Activated CD4-positive, alpha-beta memory T cell treated with anti-CD3 and anti-CD28 coated beads, Interleukin-2, amount 10 ng/mL, durations not matched to agents 7 days and 5 days (primary cell): ENCODE measurements at regions of chr17 and their contacts with region 1.

Region 1: DNA sequence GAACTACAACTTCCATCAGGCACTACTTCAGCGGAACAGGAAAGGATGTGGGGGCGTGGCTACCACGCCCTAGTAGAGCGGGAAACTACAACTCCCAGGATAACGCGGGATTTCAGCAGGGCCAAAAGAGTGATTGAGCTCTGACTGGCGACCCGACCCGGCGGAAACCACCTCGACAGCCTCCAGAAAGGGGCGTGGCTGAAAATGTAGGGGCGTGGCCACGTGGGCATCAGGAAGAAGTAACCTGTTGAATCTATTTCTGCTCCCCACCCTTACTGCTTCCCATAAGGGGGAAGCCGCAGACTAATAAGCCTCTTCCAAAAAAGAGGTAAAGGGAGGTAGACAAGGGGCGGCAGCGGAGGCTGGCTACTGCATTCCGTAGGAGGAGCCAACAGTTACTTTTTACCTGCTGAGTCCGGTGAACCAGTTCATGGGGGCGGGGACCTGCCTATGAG is at the start of gene TMEM102:
- DNase-seq: peak; percentile 98
- H3K4me3 Mint-ChIP-seq: peak within 1 kb of the TSS; percentile 90
- H3K27ac Mint-ChIP-seq: peak within 1 kb of the TSS; percentile 98
- H3K4me1 Mint-ChIP-seq: peaks cover 39% of the 10 kb centered on the region
- H3K27me3 Mint-ChIP-seq: peaks cover 20% of the 10 kb centered on the region
- total RNA-seq, gene TMEM102: 18.0 TPM

Region 2: GRCh38 chr17:7336240-7337175 is 98.7 kb before region 1 on chr17 and contains the start of gene ACAP1:
- CTCF ChIA-PET with region 1: interaction called, 10 read pairs
- POLR2A ChIA-PET with region 1: interaction called, 12 read pairs
- DNase-seq: peak; percentile 93
- H3K4me3 Mint-ChIP-seq: peak within 1 kb of the TSS; percentile 91
- H3K27ac Mint-ChIP-seq: peak within 1 kb of the TSS; percentile 91
- H3K4me1 Mint-ChIP-seq: peaks cover 59% of the 10 kb centered on the region
- H3K27me3 Mint-ChIP-seq: no peaks in the 10 kb centered on the region
- total RNA-seq, gene ACAP1: 682 to 709 TPM

Region 3: DNA sequence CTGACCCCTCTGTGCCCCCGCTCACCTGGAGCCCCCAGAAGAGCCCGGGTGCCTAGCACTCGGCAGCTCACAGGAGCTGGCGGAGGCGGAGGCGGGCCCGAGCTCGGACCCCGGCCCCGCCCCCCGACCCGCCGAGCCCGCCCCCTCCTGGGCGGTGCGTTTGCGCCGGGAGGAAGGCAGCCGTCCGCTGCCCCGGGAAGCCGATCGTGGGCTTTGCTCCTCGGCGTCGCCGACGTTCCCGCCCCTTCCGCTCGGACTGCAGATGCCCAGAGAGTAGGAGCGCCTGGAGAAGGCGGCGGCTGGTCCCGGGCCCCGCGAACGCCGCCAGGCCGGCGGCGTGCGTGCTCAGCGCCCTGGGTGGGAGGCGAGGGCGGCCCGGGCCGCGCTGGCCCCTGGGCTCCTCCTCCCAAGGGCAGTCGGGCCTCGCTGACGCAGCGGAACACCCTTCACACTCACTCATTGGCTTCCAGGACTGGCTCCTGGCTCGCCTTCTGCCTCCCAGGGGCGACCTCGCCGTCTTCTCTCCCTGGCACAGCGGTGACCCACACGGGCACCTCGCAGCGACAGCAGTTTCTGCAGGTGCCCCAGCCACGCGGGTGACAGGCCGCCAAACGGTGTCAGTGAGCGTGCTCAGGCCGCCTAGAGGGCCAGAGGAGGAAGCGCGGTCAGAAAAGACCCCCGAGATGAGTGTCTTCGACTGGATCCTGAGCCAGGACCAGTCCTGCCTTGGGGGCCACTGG is 40.6 kb before region 1 on chr17 and contains the start of gene PLSCR3:
- CTCF ChIA-PET with region 1: interaction called, 6 read pairs
- POLR2A ChIA-PET with region 1: interaction called, 19 read pairs
- DNase-seq: peak; percentile 85
- H3K4me3 Mint-ChIP-seq: peak within 1 kb of the TSS; percentile 92
- H3K27ac Mint-ChIP-seq: peak within 1 kb of the TSS; percentile 84
- H3K4me1 Mint-ChIP-seq: peaks cover 37% of the 10 kb centered on the region
- H3K27me3 Mint-ChIP-seq: no peaks in the 10 kb centered on the region
- total RNA-seq, gene PLSCR3: 149 to 156 TPM

Region 4: GRCh38 chr17:7454980-7455379 is 19.7 kb after region 1 on chr17:
- CTCF ChIA-PET with region 1: interaction called, 53 read pairs
- POLR2A ChIA-PET with region 1: interaction called, 40 read pairs
- DNase-seq: no peak
- H3K4me3 Mint-ChIP-seq: peak overlapping the region; percentile 91
- H3K27ac Mint-ChIP-seq: peak overlapping the region; percentile 92
- H3K4me1 Mint-ChIP-seq: peaks cover 30% of the 10 kb centered on the region
- H3K27me3 Mint-ChIP-seq: no peaks in the 10 kb centered on the region

Region 5: DNA sequence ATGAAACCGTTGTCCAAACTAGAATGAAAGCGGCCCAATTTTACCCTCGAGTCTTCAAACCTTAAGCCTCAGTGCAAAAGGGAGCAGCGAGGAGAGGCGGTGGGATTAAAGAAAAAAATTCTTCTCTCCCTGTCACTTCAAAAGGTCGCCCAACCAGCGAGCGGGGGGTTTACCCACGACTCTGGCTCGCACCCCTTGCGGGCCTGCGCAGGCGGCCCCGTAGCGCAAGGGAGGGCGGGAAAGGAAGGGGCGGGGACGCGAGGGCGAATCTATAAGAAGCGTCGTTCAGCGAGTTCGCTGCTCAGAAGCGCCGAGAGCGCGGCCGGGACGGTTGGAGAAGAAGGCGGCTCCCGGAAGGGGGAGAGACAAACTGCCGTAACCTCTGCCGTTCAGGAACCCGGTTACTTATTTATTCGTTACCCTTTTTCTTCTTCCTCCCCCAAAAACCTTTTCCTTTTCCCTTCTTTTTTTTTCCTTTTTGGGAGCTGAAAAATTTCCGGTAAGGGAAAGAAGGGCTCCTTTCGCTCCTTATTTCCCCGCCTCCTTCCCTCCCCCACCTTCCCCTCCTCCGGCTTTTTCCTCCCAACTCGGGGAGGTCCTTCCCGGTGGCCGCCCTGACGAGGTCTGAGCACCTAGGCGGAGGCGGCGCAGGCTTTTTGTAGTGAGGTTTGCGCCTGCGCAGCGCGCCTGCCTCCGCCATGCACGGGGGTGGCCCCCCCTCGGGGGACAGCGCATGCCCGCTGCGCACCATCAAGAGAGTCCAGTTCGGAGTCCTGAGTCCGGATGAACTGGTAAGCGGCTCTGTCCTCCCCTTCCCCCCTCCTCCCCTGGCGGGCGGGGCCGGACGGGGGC is 49.0 kb after region 1 on chr17 and contains the start of gene POLR2A:
- CTCF ChIA-PET with region 1: interaction called, 47 read pairs
- POLR2A ChIA-PET with region 1: interaction called, 232 read pairs
- DNase-seq: peak; percentile 97
- H3K4me3 Mint-ChIP-seq: peak within 1 kb of the TSS; percentile 87
- H3K27ac Mint-ChIP-seq: peak within 1 kb of the TSS; percentile 98
- H3K4me1 Mint-ChIP-seq: peaks cover 66% of the 10 kb centered on the region
- H3K27me3 Mint-ChIP-seq: no peaks in the 10 kb centered on the region
- total RNA-seq, gene POLR2A: 169 to 172 TPM

Region 6: GRCh38 chr17:7572588-7573323 is 137.5 kb after region 1 on chr17:
- CTCF ChIA-PET with region 1: interaction called, 3 read pairs
- POLR2A ChIA-PET with region 1: interaction called, 12 read pairs
- DNase-seq: peak; percentile 100
- H3K4me3 Mint-ChIP-seq: peak overlapping the region; percentile 93
- H3K27ac Mint-ChIP-seq: peak overlapping the region; percentile 99
- H3K4me1 Mint-ChIP-seq: peaks cover 63% of the 10 kb centered on the region
- H3K27me3 Mint-ChIP-seq: no peaks in the 10 kb centered on the region